K562 (cell line): ENCODE measurements at regions of chr7 and their contacts with region 1.

Region 1: DNA sequence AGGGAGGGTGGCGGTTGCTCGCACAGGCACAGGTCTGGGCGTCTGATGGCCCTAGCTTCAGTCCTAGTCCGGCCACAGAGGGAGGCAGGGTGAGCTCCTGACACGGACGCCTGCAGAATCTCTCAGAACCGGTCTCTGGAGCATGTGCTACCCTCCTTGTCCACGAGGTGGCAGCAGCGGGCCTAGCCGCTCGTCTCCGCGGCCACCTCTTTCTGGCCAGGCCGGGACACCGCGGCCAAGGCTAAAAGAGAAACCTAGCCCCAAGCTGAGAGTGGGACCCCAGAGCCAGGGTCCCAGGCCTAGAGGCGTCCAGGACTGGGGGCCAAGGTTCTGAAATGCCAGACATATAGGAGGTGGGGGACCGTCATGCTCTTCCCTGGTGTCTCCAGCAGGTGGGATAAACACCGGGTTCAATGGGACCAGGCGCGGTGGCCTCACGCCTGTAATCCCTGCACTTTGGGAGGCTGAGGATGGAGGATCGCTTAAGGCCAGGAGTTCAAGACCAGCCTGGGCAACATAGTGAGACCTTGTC is 3.2 kb upstream of the LAT2 start:
- DNase-seq: peak; percentile 84 to 90 (median 86)
- ATAC-seq: peak; percentile 86
- H3K4me3 ChIP-seq: no peak overlapping the region
- H3K27ac ChIP-seq: no peak overlapping the region
- H3K4me1 ChIP-seq: peaks cover 3 to 28% of the 10 kb centered on the region in 2 experiments; a peak in 4 of 5 replicates
- H3K27me3 ChIP-seq: no peaks in the 10 kb centered on the region; a peak in 1 of 5 replicates
- CTCF ChIP-seq: peak; percentile 95 to 99 (median 97)
- EP300 ChIP-seq: no peak
- POLR2A ChIP-seq: no peak
- RAD21 ChIP-seq: peak; percentile 96 to 98

Region 2: GRCh38 chr7:73623798-73624668 is 582.6 kb before region 1 on chr7 and contains the start of gene MLXIPL:
- CTCF ChIA-PET with region 1: no interaction called
- POLR2A ChIA-PET with region 1: no interaction called
- in situ Hi-C with region 1: no loop called
- intact Hi-C with region 1: no loop called
- DNase-seq: peak; percentile 96 to 99 (median 99)
- ATAC-seq: peak; percentile 93
- H3K4me3 ChIP-seq: peak within 1 kb of the TSS; percentile 68
- H3K27ac ChIP-seq: peak within 1 kb of the TSS; percentile 76; the same call in 2 of the 3 replicates
- H3K4me1 ChIP-seq: peaks cover 19 to 27% of the 10 kb centered on the region in 2 experiments
- H3K27me3 ChIP-seq: peaks cover 13 to 26% of the 10 kb centered on the region in 2 experiments
- CTCF ChIP-seq: no peak
- EP300 ChIP-seq: no peak
- POLR2A ChIP-seq: peak; percentile 82
- RAD21 ChIP-seq: no peak
- polyA plus RNA-seq, gene MLXIPL: 0.11 to 0.17 TPM

Region 3: DNA sequence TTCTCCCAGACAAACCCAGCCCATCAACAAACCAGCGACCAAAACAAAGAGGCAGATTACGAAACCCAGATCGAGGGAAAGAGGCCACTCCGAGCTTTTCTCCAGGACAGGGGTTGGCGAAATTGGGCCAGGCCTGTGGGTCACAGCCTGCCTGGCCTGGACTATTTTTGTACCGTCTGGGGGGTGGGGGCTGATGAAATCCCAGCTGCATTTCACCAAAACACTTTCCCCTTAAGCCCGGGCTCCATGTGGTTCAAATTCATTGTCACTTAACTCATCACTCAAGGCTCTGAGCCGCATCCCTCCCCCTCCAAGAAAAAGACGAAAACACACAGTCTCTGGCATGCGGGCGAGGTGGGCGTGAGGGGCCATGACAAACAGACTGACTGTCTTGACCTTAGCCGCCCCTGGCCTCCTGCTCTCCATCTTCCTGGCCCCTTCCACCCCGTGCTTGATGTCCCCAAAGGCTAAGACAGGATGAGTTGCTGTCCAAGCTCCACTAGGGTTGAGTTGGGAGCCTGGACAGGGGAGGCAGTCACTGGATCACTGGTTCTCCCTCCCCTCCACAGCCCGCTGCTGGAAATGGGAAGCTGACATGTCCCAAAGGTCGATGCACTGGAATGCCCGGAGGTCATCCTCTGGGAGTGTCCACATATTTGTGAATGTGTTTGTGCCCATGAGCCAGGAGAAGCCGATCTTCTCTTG is 326.5 kb before region 1 on chr7:
- CTCF ChIA-PET with region 1: no interaction called
- POLR2A ChIA-PET with region 1: no interaction called
- in situ Hi-C with region 1: loop called (anchors 10 kb)
- intact Hi-C with region 1: no loop called
- DNase-seq: no peak
- ATAC-seq: peak; percentile 50
- H3K4me3 ChIP-seq: no peak overlapping the region
- H3K27ac ChIP-seq: no peak overlapping the region
- H3K4me1 ChIP-seq: peaks cover 0 to 9% of the 10 kb centered on the region in 2 experiments; a peak in 1 of 5 replicates
- H3K27me3 ChIP-seq: peaks cover 21 to 63% of the 10 kb centered on the region in 2 experiments
- CTCF ChIP-seq: no peak
- EP300 ChIP-seq: no peak
- POLR2A ChIP-seq: no peak
- RAD21 ChIP-seq: no peak

Region 4: DNA sequence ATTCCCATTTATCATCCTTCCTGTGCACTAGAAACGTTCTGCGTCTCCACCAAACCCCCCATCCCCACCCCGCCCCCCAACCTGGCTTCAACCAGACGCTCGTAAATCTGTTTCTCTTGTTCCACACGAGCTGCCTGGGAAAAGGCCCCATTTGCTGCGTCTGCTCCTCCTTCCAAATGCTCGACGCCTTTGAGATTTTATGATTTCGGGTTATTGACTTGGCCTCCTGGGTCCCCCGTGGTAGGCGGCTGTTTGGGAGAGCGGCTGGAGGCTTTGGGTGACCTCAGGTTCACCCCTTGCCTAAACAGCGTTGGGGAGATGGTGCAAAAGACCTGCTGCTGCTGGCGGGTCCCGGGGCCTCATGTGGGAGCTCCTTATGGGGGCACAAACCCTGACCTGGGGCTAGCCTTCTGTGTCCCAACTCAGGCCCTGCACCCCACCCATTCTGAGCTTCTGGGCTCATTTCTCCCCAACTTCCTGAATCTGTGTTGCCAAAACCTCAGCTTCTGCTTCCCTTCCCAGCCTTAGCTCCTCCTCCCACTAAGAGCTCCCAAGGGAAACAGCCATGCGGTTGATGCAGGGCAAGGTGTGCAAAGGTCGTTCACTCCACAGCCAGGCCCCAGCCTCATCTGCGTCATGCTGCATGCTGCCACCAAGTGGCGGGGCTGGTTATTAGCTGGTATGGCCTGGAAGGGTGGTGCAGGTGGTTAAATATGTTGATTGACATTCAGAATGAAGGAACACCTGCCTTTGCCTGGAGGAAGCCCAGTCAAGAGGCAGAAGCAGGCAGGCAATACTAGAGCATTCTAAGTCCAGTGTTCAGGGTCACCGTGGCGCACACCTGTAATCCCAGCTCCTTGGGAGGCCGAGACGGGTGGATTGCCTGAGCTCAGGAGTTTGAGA is 227.7 kb before region 1 on chr7:
- CTCF ChIA-PET with region 1: no interaction called
- POLR2A ChIA-PET with region 1: no interaction called
- in situ Hi-C with region 1: no loop called
- intact Hi-C with region 1: no loop called
- DNase-seq: peak; percentile 64 to 76 (median 74)
- ATAC-seq: peak; percentile 90
- H3K4me3 ChIP-seq: no peak overlapping the region
- H3K27ac ChIP-seq: no peak overlapping the region
- H3K4me1 ChIP-seq: peaks cover 2 to 10% of the 10 kb centered on the region in 2 experiments; a peak in 3 of 5 replicates
- H3K27me3 ChIP-seq: peaks cover 36 to 77% of the 10 kb centered on the region in 2 experiments
- CTCF ChIP-seq: peak; percentile 69 to 81 (median 70)
- EP300 ChIP-seq: no peak
- POLR2A ChIP-seq: no peak
- RAD21 ChIP-seq: peak; percentile 52 to 69

Region 5: DNA sequence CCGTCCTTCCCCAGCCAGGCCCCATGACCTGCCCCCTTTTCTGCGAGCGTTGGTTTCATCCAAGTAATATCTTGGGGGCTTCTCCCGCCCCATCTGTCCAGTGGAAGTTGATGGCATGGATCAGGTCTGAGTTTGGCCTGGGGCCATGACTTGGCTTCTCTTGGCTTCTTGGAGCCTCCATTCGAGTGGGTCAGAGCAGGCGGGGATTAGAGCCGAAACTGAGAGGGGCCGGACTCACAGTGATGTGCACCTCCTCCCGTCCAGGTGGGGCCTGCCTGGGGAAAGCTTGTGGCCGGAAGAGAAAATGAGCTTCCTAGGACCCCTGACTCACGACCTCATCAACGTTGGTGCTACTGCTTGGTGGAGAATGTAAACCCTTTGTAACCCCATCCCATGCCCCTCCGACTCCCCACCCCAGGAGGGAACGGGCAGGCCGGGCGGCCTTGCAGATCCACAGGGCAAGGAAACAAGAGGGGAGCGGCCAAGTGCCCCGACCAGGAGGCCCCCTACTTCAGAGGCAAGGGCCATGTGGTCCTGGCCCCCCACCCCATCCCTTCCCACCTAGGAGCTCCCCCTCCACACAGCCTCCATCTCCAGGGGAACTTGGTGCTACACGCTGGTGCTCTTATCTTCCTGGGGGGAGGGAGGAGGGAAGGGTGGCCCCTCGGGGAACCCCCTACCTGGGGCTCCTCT is 138.1 kb before region 1 on chr7:
- CTCF ChIA-PET with region 1: interaction called, 10 read pairs
- POLR2A ChIA-PET with region 1: interaction called, 3 read pairs
- in situ Hi-C with region 1: loop called (anchors 5 kb)
- intact Hi-C with region 1: loop called (anchors 1 kb)
- DNase-seq: peak in 2 of 4 experiments; percentile 5 to 6
- ATAC-seq: no peak
- H3K4me3 ChIP-seq: no peak overlapping the region
- H3K27ac ChIP-seq: no peak overlapping the region
- H3K4me1 ChIP-seq: peaks cover 0 to 7% of the 10 kb centered on the region in 2 experiments; a peak in 2 of 5 replicates
- H3K27me3 ChIP-seq: peaks cover 0 to 10% of the 10 kb centered on the region in 2 experiments; a peak in 1 of 5 replicates
- CTCF ChIP-seq: no peak
- EP300 ChIP-seq: no peak
- POLR2A ChIP-seq: no peak
- RAD21 ChIP-seq: no peak

Region 6: GRCh38 chr7:74141705-74142104 is 65.0 kb before region 1 on chr7:
- CTCF ChIA-PET with region 1: no interaction called
- POLR2A ChIA-PET with region 1: no interaction called
- in situ Hi-C with region 1: no loop called
- intact Hi-C with region 1: no loop called
- DNase-seq: no peak
- ATAC-seq: no peak
- H3K4me3 ChIP-seq: no peak overlapping the region
- H3K27ac ChIP-seq: no peak overlapping the region
- H3K4me1 ChIP-seq: no peaks in the 10 kb centered on the region; a peak in 2 of 5 replicates
- H3K27me3 ChIP-seq: no peaks in the 10 kb centered on the region
- CTCF ChIP-seq: no peak
- EP300 ChIP-seq: no peak
- POLR2A ChIP-seq: no peak
- RAD21 ChIP-seq: no peak

Region 7: DNA sequence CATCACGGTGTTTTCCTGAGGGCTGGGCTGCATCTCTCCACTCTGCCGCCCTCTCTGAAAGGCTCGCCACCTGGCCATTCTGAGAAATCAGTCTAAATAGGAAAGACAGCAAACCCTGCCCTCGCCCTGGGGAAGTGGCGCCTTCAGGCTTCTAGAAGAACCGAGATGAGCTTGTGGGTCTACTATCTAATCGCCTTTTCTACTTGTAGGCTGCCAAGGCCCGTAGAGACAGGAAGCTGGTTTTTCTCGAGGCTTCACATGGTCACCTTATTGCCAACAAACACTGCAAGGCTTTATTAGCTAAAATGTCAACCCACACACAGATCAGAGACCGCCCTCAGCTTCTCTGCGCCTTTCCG is 24.6 kb after region 1 on chr7:
- CTCF ChIA-PET with region 1: no interaction called
- POLR2A ChIA-PET with region 1: no interaction called
- in situ Hi-C with region 1: no loop called
- intact Hi-C with region 1: no loop called
- DNase-seq: no peak
- ATAC-seq: no peak
- H3K4me3 ChIP-seq: no peak overlapping the region
- H3K27ac ChIP-seq: no peak overlapping the region
- H3K4me1 ChIP-seq: peaks cover 0 to 9% of the 10 kb centered on the region in 2 experiments; a peak in 4 of 5 replicates
- H3K27me3 ChIP-seq: no peaks in the 10 kb centered on the region
- CTCF ChIP-seq: no peak
- EP300 ChIP-seq: no peak
- POLR2A ChIP-seq: no peak
- RAD21 ChIP-seq: no peak

Region 8: GRCh38 chr7:74395745-74396311 is 189.2 kb after region 1 on chr7:
- CTCF ChIA-PET with region 1: interaction called, 51 read pairs
- POLR2A ChIA-PET with region 1: interaction called, 7 read pairs
- in situ Hi-C with region 1: loop called (anchors 5 kb)
- intact Hi-C with region 1: loop called (anchors 1 kb)
- DNase-seq: no peak
- ATAC-seq: no peak
- H3K4me3 ChIP-seq: no peak overlapping the region
- H3K27ac ChIP-seq: no peak overlapping the region
- H3K4me1 ChIP-seq: peaks cover 2 to 7% of the 10 kb centered on the region in 2 experiments; a peak in 3 of 5 replicates
- H3K27me3 ChIP-seq: no peaks in the 10 kb centered on the region
- CTCF ChIP-seq: no peak
- EP300 ChIP-seq: no peak
- POLR2A ChIP-seq: no peak
- RAD21 ChIP-seq: no peak